ENCODE measurements at regions of chr14 and their contacts with region 1.

Region 1: GRCh38 chr14:75411214-75411540 is 16.6 kb upstream of the JDP2 start:
- DNase-seq: no peak
- ATAC-seq: no peak
- H3K4me3 ChIP-seq: no peak overlapping the region
- H3K27ac ChIP-seq: no peak overlapping the region
- H3K4me1 ChIP-seq: peaks cover 18 to 27% of the 10 kb centered on the region in 2 donors
- H3K27me3 ChIP-seq: no peaks in the 10 kb centered on the region
- CTCF ChIP-seq: no peak
- POLR2A ChIP-seq: no peak

Region 2: DNA sequence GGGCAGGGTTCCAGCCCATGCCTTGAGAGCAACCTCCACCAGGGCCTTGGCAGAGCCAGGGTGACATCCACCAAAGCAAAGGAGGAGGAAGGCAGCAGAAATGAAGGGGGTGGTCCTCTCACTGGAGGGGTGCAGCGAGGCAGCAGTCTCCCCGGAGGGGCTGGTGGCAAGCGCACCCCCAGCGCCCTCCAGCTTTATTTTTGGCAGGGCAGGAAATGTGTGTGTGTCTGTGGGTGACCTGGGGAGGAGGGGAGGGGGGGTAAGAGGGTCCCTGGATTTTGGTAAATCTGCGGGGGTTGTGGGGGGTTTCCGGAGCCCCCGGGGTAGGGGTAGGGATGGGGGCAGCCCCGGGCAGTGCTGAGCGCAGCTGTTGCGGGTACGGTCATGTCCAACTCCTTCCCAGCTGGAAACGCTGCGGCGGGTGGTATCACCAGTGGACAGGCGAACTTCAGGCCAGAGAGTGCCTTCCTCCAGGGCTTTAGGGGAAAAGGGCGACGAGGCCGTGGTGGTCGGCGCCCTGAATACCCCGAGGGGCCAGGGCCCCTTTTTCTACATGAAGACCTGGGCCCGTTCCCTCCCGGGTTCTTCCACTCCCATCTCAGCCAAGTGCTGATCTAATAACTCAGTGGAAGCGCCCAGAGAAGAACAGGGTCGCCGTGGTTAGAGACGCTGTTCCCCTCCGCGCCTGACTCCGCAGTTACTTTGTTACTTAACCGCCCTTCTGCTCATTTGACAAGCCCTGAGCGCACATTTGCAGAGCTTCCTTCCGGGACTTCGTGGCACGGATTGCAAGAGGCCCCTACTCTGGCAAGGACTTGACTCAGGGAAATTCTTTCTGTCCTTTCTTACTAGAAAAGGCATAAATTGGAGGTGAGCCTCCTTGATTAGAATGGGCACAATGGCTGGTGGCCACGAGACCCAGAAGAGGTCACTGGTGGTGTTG is 77.3 kb before region 1 on chr14:
- in situ Hi-C with region 1: no loop called
- intact Hi-C with region 1: no loop called
- DNase-seq: peak in 1 of 2 donors; percentile 49
- ATAC-seq: peak; percentile 28 to 44
- H3K4me3 ChIP-seq: no peak overlapping the region
- H3K27ac ChIP-seq: peak overlapping the region; percentile 56 to 68 (median 62)
- H3K4me1 ChIP-seq: peaks cover 9 to 13% of the 10 kb centered on the region in 2 donors
- H3K27me3 ChIP-seq: no peaks in the 10 kb centered on the region
- CTCF ChIP-seq: no peak
- POLR2A ChIP-seq: peak; percentile 12 to 34

Region 3: DNA sequence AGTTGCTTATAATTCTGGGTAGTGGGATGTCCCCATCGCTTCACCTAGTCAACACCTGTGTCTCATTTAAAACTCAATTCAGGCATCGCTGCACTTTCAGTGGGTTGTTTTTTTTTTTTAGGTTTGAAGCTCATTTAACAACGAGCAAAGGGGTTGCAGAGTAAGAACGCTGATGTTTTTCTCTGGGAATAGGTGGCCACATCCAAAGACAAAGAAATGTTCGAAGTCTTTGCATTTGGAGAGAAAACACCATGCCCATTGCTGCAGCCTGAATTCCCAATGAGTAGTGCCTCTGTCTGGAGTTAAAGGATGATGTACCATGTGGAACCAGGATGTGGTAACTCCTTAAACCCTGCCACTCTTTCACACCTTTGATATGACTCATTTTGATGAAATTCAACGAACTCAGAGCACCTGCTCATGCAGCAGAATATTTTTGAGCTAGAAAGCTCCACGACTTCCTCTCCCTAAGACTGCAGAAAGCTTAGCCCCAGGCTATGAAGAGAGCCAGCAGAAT is 76.0 kb after region 1 on chr14:
- in situ Hi-C with region 1: no loop called
- intact Hi-C with region 1: loop called (anchors 5 kb)
- DNase-seq: no peak
- ATAC-seq: no peak
- H3K4me3 ChIP-seq: no peak overlapping the region
- H3K27ac ChIP-seq: no peak overlapping the region
- H3K4me1 ChIP-seq: peaks cover 0 to 6% of the 10 kb centered on the region in 2 donors
- H3K27me3 ChIP-seq: no peaks in the 10 kb centered on the region
- CTCF ChIP-seq: no peak
- POLR2A ChIP-seq: no peak

Region 4: GRCh38 chr14:75522224-75522982 is 111.2 kb after region 1 on chr14 and contains the start of gene BATF:
- in situ Hi-C with region 1: no loop called
- intact Hi-C with region 1: no loop called
- DNase-seq: no peak
- ATAC-seq: no peak
- H3K4me3 ChIP-seq: peak within 1 kb of the TSS in 1 of 4 donors; percentile 23
- H3K27ac ChIP-seq: no peak within 1 kb of the TSS
- H3K4me1 ChIP-seq: no peaks in the 10 kb centered on the region
- H3K27me3 ChIP-seq: no peaks in the 10 kb centered on the region
- CTCF ChIP-seq: no peak
- POLR2A ChIP-seq: no peak
- total RNA-seq, gene BATF: 0.36 to 5.2 (median 1.1) TPM

Region 5: GRCh38 chr14:75539561-75540478 is 128.6 kb after region 1 on chr14:
- in situ Hi-C with region 1: no loop called
- intact Hi-C with region 1: no loop called
- DNase-seq: no peak
- ATAC-seq: no peak
- H3K4me3 ChIP-seq: no peak overlapping the region
- H3K27ac ChIP-seq: no peak overlapping the region
- H3K4me1 ChIP-seq: peaks cover 16 to 24% of the 10 kb centered on the region in 2 donors
- H3K27me3 ChIP-seq: no peaks in the 10 kb centered on the region
- CTCF ChIP-seq: no peak
- POLR2A ChIP-seq: no peak